Activated CD8-positive, alpha-beta memory T cell treated with anti-CD3 and anti-CD28 coated beads, Interleukin-2, amount 10 ng/mL, durations not matched to agents 7 days and 5 days (primary cell): ENCODE measurements at regions of chr11 and their contacts with region 1.

Region 1: DNA sequence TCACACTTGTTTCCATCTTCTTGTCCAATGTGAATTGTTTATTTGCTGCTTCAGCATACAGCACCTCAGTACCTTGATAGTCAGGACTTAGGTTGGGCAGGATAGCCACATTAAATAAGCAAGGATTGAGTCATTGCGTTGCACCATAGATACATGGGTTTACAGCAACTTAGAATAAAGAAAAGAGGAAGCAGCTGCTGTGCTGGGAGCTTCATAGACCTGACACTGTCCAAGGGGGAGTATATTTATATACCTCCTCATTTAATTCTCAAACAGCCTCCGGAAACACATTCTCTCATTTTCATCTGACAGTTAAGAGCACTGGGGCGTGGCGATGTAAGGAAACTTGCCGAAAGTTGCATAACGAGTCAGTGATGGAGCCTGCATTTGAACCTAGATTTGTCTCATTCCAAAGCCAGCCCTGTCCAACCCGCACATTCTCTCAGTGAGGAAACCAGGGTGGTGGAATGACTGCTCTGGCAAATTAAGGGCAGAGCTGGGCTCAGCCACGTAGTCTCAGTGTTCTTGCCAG is 42.2 kb downstream of the UBASH3B start:
- DNase-seq: peak; percentile 70
- ATAC-seq: peak; percentile 87
- H3K4me3 Mint-ChIP-seq: peak overlapping the region; percentile 22
- H3K27ac Mint-ChIP-seq: peak overlapping the region; percentile 87
- H3K4me1 Mint-ChIP-seq: peaks cover 62% of the 10 kb centered on the region
- H3K27me3 Mint-ChIP-seq: no peaks in the 10 kb centered on the region

Region 2: DNA sequence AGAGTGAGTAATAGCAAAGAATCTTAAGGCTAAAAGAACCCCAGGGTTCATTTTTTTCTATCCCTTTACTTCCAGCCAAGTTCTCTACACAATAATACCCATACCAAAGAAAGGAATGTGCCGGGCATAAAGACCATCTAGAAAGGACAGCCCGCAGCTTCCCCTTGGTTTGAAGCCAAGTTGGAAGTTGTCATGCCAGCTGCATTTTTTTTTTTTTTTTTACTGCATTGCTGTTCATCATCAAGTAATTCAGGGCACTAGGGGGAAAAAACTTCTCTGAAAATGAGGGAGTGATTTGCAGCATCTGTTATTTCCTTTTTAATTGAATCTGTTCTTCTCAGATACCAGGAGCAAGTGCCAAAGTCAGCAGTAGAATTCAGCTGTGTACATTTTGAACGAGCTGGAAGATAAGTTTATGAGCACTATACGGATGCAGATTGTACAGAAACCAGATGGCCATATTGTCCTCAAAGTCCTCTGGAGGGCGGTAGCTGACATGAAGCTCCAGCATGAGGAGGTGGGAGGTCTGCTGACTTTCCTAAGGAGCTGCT is 14.2 kb after region 1 on chr11:
- CTCF ChIA-PET with region 1: interaction called, 26 read pairs
- DNase-seq: no peak
- ATAC-seq: no peak
- H3K4me3 Mint-ChIP-seq: no peak overlapping the region
- H3K27ac Mint-ChIP-seq: no peak overlapping the region
- H3K4me1 Mint-ChIP-seq: peaks cover 50% of the 10 kb centered on the region
- H3K27me3 Mint-ChIP-seq: no peaks in the 10 kb centered on the region

Region 3: DNA sequence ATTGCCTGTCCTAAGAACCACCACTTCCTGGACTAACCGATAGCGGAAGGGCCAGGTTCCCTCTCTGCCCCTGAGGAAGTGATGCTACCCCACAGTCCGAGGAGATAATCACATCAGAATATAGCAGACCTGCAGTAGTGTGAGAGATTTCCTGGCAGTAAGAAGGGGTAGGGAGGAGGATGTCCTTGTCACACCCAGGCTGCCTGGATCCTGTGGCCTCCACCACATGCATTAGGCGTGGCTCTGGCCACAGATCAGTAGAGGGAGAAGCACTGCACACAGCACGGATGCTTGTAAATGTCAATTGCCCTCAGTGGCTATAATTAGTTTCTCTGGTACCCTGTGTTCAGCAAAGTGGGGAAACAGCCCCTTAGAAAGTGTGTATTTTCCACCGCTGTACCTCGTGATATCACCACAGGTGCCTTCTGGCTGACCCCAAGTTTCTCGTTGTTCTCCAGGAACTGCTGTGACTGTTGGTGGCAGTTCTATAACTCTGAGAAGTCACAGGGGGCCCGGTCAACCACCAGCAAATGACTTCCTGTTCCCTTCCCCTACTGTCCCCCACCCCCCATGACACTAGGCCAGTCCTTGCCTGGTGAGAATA is 19.7 kb after region 1 on chr11:
- CTCF ChIA-PET with region 1: interaction called, 26 read pairs
- DNase-seq: peak; percentile 95
- ATAC-seq: peak; percentile 85
- H3K4me3 Mint-ChIP-seq: peak overlapping the region; percentile 54
- H3K27ac Mint-ChIP-seq: peak overlapping the region; percentile 92
- H3K4me1 Mint-ChIP-seq: peaks cover 89% of the 10 kb centered on the region
- H3K27me3 Mint-ChIP-seq: no peaks in the 10 kb centered on the region